ENCODE measurements at regions of chr22 and their contacts with region 1.

Region 1: DNA sequence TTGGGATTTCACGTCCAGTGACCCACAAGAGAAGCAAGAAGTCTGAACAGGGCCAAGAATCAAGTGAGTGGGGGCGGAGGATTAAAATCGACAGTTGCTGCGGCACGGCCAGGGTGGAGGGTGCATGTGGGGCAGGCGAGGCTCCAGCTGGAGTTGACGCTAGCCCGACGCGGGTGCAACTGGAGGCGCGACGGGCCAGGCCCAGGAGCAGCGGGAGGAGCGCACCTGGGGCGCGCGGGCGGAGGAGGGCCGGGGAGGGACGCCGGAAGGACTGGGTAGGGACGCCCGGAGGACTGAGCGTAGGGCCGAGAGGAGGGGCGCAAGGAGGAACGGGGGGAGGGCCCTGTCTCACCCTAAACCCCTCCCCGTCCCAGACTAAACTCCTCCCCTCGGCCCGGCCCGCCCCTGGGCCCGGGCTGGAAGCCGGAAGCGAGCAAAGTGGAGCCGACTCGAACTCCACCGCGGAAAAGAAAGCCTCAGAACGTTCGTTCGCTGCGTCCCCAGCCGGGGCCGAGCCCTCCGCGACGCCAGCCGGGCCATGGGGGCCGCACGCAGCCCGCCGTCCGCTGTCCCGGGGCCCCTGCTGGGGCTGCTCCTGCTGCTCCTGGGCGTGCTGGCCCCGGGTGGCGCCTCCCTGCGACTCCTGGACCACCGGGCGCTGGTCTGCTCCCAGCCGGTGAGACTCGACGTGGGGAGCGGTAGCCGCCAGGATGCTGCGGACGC is at the start of gene IL17RA:
- DNase-seq: peak; percentile 90 to 97 (median 94)
- ATAC-seq: peak; percentile 97
- H3K4me3 ChIP-seq: peak within 1 kb of the TSS; percentile 59
- H3K4me3 Mint-ChIP-seq: peak within 1 kb of the TSS; percentile 87 to 99 (median 97)
- H3K27ac ChIP-seq: peak within 1 kb of the TSS; percentile 89
- H3K27ac Mint-ChIP-seq: peak within 1 kb of the TSS; percentile 88 to 98 (median 94)
- H3K4me1 ChIP-seq: peaks cover 28 to 41% of the 10 kb centered on the region in 2 donors
- H3K4me1 Mint-ChIP-seq: peaks cover 24 to 49% (median 36%) of the 10 kb centered on the region in 7 donors
- H3K27me3 ChIP-seq: no peaks in the 10 kb centered on the region
- H3K27me3 Mint-ChIP-seq: peaks cover 0 to 8% (median 0%) of the 10 kb centered on the region in 5 donors
- total RNA-seq, gene IL17RA: 51.9 to 91.8 (median 76.5) TPM

Region 2: GRCh38 chr22:16717699-16718558 is 366.8 kb before region 1 on chr22:
- CTCF ChIA-PET with region 1: no interaction called
- POLR2A ChIA-PET with region 1: no interaction called
- intact Hi-C with region 1: no loop called
- DNase-seq: no peak
- ATAC-seq: no peak
- H3K4me3 ChIP-seq: no peak overlapping the region
- H3K4me3 Mint-ChIP-seq: no peak overlapping the region
- H3K27ac ChIP-seq: no peak overlapping the region
- H3K27ac Mint-ChIP-seq: no peak overlapping the region
- H3K4me1 ChIP-seq: no peaks in the 10 kb centered on the region
- H3K4me1 Mint-ChIP-seq: peaks cover 0 to 2% (median 0%) of the 10 kb centered on the region in 7 donors
- H3K27me3 ChIP-seq: no peaks in the 10 kb centered on the region
- H3K27me3 Mint-ChIP-seq: peaks cover 7 to 29% (median 21%) of the 10 kb centered on the region in 5 donors

Region 3: DNA sequence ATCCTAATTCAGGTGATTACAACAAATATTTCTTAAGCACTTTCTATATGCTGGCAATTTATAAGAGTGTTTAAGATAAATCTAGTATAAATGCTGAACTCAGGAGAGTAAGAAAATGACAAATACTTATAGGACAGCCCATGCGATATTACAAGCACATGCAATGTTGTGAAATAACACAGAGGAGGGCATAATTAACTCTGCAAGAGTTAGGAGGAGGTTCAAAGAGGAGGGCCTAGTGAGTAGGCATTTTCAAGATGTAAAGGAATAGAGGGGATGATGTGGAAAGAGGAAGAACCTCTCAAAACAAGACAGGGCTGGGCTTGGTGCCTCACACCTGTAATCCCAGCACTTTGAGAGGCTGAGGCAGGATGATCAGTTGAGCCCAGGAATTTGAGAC is 37.1 kb before region 1 on chr22:
- CTCF ChIA-PET with region 1: no interaction called
- POLR2A ChIA-PET with region 1: no interaction called
- intact Hi-C with region 1: no loop called
- DNase-seq: no peak
- ATAC-seq: peak; percentile 16
- H3K4me3 ChIP-seq: no peak overlapping the region
- H3K4me3 Mint-ChIP-seq: no peak overlapping the region
- H3K27ac ChIP-seq: no peak overlapping the region
- H3K27ac Mint-ChIP-seq: peak overlapping the region in 1 of 9 donors; percentile 32
- H3K4me1 ChIP-seq: no peaks in the 10 kb centered on the region
- H3K4me1 Mint-ChIP-seq: peaks cover 0 to 2% (median 0%) of the 10 kb centered on the region in 7 donors
- H3K27me3 ChIP-seq: no peaks in the 10 kb centered on the region
- H3K27me3 Mint-ChIP-seq: peaks cover 0 to 6% (median 0%) of the 10 kb centered on the region in 5 donors

Region 4: GRCh38 chr22:17095538-17095937 is 10.8 kb after region 1 on chr22:
- CTCF ChIA-PET with region 1: interaction called, 10 read pairs
- POLR2A ChIA-PET with region 1: interaction called, 63 read pairs
- intact Hi-C with region 1: loop called (anchors 1 kb)
- DNase-seq: no peak
- ATAC-seq: no peak
- H3K4me3 ChIP-seq: no peak overlapping the region
- H3K4me3 Mint-ChIP-seq: peak overlapping the region in 6 of 10 donors; percentile 18 to 87 (median 42)
- H3K27ac ChIP-seq: peak overlapping the region; percentile 16
- H3K27ac Mint-ChIP-seq: peak overlapping the region in 8 of 9 donors; percentile 23 to 94 (median 75)
- H3K4me1 ChIP-seq: peaks cover 40 to 82% of the 10 kb centered on the region in 2 donors
- H3K4me1 Mint-ChIP-seq: peaks cover 77 to 100% (median 93%) of the 10 kb centered on the region in 7 donors
- H3K27me3 ChIP-seq: no peaks in the 10 kb centered on the region
- H3K27me3 Mint-ChIP-seq: no peaks in the 10 kb centered on the region

Region 5: GRCh38 chr22:17120281-17120680 is 35.6 kb after region 1 on chr22:
- CTCF ChIA-PET with region 1: no interaction called
- POLR2A ChIA-PET with region 1: interaction called, 114 read pairs
- intact Hi-C with region 1: loop called (anchors 1 kb)
- DNase-seq: peak; percentile 36 to 74 (median 53)
- ATAC-seq: peak; percentile 79
- H3K4me3 ChIP-seq: no peak overlapping the region
- H3K4me3 Mint-ChIP-seq: peak overlapping the region in 7 of 10 donors; percentile 21 to 78 (median 58)
- H3K27ac ChIP-seq: no peak overlapping the region
- H3K27ac Mint-ChIP-seq: no peak overlapping the region
- H3K4me1 ChIP-seq: peaks cover 46 to 54% of the 10 kb centered on the region in 2 donors
- H3K4me1 Mint-ChIP-seq: peaks cover 41 to 50% (median 47%) of the 10 kb centered on the region in 7 donors
- H3K27me3 ChIP-seq: peaks cover 0 to 10% of the 10 kb centered on the region in 2 donors
- H3K27me3 Mint-ChIP-seq: peaks cover 6 to 43% (median 12%) of the 10 kb centered on the region in 5 donors

Region 6: DNA sequence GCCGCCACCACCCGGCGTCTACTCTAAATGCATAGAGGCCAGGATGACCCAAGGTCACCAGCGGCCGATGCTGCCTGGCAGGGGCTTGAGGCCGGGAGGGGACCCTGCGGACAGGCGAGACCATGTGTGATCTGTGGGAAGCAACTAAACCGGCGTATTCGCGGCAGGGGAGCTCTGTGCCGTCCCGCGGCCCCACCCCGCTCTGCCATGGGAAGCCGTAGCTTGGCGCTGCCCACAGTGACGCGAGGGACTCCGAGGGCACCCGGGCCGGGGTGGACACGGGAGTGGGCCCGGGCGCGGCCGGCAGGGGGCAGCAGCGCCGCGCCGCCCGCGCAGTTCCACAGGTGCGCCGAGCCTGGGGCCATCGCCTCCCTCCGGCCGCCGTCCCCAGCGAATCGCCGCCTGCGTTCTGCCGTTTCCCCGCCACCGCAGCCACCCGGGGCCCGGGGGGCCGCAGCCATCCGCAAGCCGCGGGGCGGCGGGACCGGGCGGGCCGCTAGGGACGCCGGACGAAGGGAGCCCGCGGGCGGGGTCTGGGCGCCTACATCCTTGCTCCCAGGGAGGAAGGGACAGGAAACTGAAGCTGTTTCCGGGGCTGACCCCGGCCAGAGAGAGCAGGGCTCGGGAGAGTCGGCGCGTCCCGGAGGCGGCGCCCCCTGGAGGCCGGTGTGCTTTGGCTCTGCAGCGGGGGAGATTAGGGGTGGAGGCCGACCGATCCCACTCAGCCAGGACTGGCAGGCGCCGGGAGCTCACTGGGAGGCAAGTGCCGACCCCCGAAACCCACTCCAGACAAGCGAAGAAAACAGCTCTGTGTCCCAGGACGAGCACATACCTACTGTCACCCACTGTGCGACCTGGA is 86.8 kb after region 1 on chr22:
- CTCF ChIA-PET with region 1: interaction called, 11 read pairs
- POLR2A ChIA-PET with region 1: interaction called, 3 read pairs
- intact Hi-C with region 1: loop called (anchors 1 to 2 kb)
- DNase-seq: peak; percentile 54 to 89 (median 64)
- ATAC-seq: peak; percentile 96
- H3K4me3 ChIP-seq: peak overlapping the region; percentile 71
- H3K4me3 Mint-ChIP-seq: peak overlapping the region; percentile 82 to 91 (median 86)
- H3K27ac ChIP-seq: peak overlapping the region; percentile 66
- H3K27ac Mint-ChIP-seq: peak overlapping the region; percentile 24 to 88 (median 71)
- H3K4me1 ChIP-seq: peaks cover 0 to 4% of the 10 kb centered on the region in 2 donors
- H3K4me1 Mint-ChIP-seq: peaks cover 3 to 9% (median 5%) of the 10 kb centered on the region in 7 donors
- H3K27me3 ChIP-seq: no peaks in the 10 kb centered on the region
- H3K27me3 Mint-ChIP-seq: peaks cover 0 to 11% (median 0%) of the 10 kb centered on the region in 5 donors

Region 7: DNA sequence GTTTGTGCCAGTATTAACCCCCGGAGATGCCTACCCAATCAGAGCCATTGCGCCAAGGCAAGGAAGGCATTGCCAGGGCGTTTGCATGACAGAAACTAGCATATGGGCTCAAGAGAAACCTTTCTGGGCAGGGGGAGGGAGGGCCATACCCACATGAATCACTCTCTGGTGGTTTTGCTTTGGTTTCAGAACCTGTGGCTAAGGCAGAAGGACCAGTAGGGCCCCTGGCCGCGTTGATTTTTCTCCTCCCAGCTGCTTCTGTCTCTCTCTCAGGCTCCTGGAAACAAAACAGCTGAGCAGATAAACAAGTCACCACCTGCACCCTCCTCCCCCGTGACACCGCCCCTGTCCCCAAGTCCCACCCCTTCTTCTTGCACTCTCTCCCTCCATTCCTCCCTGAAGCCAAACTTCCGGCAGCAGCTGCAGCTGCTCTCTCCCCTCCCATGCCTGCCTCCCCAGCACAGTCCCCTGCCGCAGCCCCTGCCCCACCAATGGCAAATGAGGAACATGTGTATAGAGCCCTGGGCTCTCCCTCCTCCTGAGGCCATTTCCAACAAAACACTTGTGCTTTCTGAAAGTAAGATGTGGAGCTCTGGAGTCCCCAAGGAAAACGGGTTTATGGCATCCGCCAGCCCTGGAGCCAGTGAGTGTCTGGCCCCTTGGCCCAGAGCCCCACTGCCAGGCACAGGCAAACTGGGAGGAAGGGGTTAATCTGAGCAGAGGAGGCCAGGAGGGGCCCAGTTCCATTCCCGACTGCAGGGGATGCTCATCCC is 173.5 kb after region 1 on chr22:
- CTCF ChIA-PET with region 1: no interaction called
- POLR2A ChIA-PET with region 1: no interaction called
- intact Hi-C with region 1: no loop called
- DNase-seq: peak in 8 of 9 donors; percentile 37 to 65 (median 52)
- ATAC-seq: peak; percentile 82
- H3K4me3 ChIP-seq: peak overlapping the region; percentile 38
- H3K4me3 Mint-ChIP-seq: peak overlapping the region; percentile 23 to 82 (median 67)
- H3K27ac ChIP-seq: peak overlapping the region; percentile 41
- H3K27ac Mint-ChIP-seq: peak overlapping the region; percentile 59 to 93 (median 89)
- H3K4me1 ChIP-seq: peaks cover 0 to 20% of the 10 kb centered on the region in 2 donors
- H3K4me1 Mint-ChIP-seq: peaks cover 13 to 36% (median 26%) of the 10 kb centered on the region in 7 donors
- H3K27me3 ChIP-seq: no peaks in the 10 kb centered on the region
- H3K27me3 Mint-ChIP-seq: no peaks in the 10 kb centered on the region

Region 8: DNA sequence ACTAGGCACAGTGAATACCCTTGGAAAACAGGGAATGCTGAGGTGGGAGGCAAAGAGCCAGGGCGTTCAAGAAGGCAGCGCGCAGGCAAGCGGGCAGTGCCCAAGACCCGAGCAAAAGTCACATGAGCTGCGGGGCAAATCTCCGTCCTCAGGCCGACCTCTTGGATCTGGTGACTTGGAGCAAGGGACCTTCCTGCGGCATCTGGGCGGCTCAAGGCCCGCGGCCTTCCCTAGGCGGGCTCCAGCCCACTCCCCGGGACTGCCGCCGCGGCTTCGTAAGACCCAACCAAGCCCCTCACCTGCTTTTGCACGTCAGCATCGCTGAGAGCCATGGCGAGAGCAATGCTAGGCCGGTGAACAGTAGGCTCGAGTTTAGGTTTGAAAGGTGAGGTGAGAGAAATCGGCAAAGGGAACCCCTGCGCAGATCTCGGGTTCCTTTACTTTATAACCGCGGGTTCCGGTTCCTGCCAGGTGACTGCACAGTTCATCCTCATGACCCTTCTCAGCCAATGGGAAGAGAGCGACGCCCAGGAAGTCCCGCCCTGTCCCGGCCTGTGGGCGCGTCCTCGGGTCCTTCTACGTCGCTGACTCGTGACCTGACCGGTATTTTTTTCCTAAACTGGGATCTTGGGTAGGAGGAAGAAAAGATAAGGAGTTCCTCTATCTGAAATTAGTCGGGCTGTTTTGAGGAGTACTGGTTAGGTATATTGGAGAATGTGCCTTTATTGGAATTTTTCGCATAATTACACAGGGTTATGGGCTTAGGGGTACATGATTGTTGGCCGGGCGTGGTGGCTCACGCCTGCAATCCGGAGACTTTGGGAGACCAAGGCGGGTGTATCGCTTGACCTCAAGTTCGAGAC is 543.8 kb after region 1 on chr22 and contains the start of gene ATP6V1E1:
- CTCF ChIA-PET with region 1: no interaction called
- POLR2A ChIA-PET with region 1: no interaction called
- intact Hi-C with region 1: loop called (anchors 2 kb)
- DNase-seq: peak; percentile 82 to 96 (median 94)
- ATAC-seq: peak; percentile 100
- H3K4me3 ChIP-seq: peak within 1 kb of the TSS; percentile 100
- H3K4me3 Mint-ChIP-seq: peak within 1 kb of the TSS; percentile 89 to 99 (median 96)
- H3K27ac ChIP-seq: peak within 1 kb of the TSS; percentile 97
- H3K27ac Mint-ChIP-seq: peak within 1 kb of the TSS; percentile 90 to 99 (median 97)
- H3K4me1 ChIP-seq: peaks cover 13 to 14% of the 10 kb centered on the region in 2 donors
- H3K4me1 Mint-ChIP-seq: peaks cover 7 to 40% (median 31%) of the 10 kb centered on the region in 7 donors
- H3K27me3 ChIP-seq: no peaks in the 10 kb centered on the region
- H3K27me3 Mint-ChIP-seq: no peaks in the 10 kb centered on the region
- total RNA-seq, gene ATP6V1E1: 51.0 to 101 (median 80.4) TPM

Region 9: DNA sequence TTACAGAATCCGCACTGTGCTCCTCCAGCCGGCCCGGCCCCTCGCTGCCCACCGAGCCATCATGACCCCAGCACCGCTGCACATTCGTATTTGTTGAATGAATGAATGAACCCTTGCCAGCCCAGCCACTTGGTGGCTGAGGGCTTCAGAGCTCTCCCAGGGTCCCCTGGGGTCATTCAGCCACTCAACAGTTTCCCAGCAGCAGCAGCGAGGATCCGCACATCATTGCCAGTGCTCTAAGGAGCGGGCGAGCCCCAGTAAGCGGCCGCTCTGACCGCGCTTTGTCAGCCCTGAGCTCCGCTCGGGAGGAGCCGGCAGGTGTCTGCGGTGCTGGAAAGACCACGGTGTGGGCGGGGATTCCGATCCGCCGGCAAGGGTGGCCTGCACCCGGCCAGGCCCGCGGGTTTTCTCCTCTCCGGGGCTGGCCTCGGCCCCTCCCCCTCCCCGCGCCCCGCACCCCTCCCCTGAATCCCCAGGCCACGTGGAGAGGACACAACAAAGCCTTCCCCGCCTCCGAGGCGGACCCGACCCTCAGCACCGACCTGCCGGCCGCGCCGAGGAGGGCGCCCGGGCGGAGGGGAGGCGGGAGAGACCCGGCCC is 689.0 kb after region 1 on chr22:
- CTCF ChIA-PET with region 1: no interaction called
- POLR2A ChIA-PET with region 1: no interaction called
- intact Hi-C with region 1: loop called in 1 of 2 experiments (anchors 5 kb)
- DNase-seq: peak in 5 of 9 donors; percentile 39 to 76 (median 41)
- ATAC-seq: peak; percentile 40
- H3K4me3 ChIP-seq: peak overlapping the region; percentile 64
- H3K4me3 Mint-ChIP-seq: peak overlapping the region; percentile 76 to 95 (median 90)
- H3K27ac ChIP-seq: peak overlapping the region; percentile 69
- H3K27ac Mint-ChIP-seq: peak overlapping the region in 8 of 9 donors; percentile 72 to 93 (median 82)
- H3K4me1 ChIP-seq: peaks cover 46 to 63% of the 10 kb centered on the region in 2 donors
- H3K4me1 Mint-ChIP-seq: peaks cover 48 to 81% (median 61%) of the 10 kb centered on the region in 7 donors
- H3K27me3 ChIP-seq: no peaks in the 10 kb centered on the region
- H3K27me3 Mint-ChIP-seq: peaks cover 0 to 8% (median 0%) of the 10 kb centered on the region in 5 donors